Caco-2 (cell line): ENCODE measurements at regions of chr9 and their contacts with region 1.

Region 1: DNA sequence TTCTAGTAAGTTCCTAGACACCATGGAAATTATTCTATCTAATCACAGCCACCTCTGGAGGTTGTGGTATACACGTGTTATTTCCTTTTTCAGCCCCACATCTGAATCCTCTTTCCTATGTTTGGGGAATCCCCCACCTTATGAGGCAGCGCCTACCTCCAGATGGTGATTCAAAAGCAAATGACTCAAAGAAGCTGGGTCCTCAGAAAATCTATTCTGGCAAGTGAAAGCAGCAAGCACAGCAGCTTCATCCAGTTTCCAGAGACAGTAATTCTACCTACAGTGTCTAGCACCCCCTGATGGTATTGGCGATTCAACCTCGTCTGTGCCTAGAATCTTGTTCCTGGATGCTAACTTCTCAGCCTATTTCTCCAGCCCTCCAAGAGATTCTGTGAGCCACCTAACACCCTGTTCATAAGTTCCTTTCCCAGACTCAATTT is 43.0 kb downstream of the STRBP start:
- DNase-seq: peak; percentile 43 to 46
- H3K4me3 ChIP-seq: no peak overlapping the region
- H3K4me3 Mint-ChIP-seq: no peak overlapping the region
- H3K27ac Mint-ChIP-seq: no peak overlapping the region
- H3K4me1 ChIP-seq: peaks cover 6% of the 10 kb centered on the region; the same call in 1 of the 2 replicates
- H3K4me1 Mint-ChIP-seq: peaks cover 13% of the 10 kb centered on the region
- H3K27me3 ChIP-seq: no peaks in the 10 kb centered on the region
- H3K27me3 Mint-ChIP-seq: no peaks in the 10 kb centered on the region
- CTCF ChIP-seq: peak; percentile 33 to 58

Region 2: DNA sequence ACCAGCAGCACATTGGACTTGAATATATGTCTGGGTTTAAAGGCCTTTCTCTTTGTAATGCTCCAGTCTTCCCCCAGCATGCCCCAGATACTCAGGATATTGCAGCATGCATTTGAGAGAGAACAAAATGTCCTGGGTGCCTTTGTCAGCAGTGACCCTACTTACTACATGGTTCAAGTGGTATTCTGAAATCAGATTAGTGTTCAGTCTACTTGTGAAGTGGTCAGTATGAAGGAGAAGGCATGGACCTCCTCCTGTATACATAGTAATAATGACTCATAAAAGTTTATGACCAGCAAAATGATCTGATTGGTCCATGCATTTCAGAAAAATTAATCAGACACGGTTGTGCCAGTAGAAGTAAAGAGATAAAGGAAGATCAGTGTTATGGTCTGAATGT is 166.6 kb before region 1 on chr9:
- CTCF ChIA-PET with region 1: no interaction called
- POLR2A ChIA-PET with region 1: no interaction called
- intact Hi-C with region 1: no loop called
- DNase-seq: no peak
- H3K4me3 ChIP-seq: no peak overlapping the region
- H3K4me3 Mint-ChIP-seq: no peak overlapping the region
- H3K27ac Mint-ChIP-seq: no peak overlapping the region
- H3K4me1 ChIP-seq: peaks cover 5% of the 10 kb centered on the region; the same call in 1 of the 2 replicates
- H3K4me1 Mint-ChIP-seq: no peaks in the 10 kb centered on the region
- H3K27me3 ChIP-seq: no peaks in the 10 kb centered on the region
- H3K27me3 Mint-ChIP-seq: no peaks in the 10 kb centered on the region
- CTCF ChIP-seq: no peak

Region 3: GRCh38 chr9:123081824-123082223 is 143.6 kb before region 1 on chr9:
- CTCF ChIA-PET with region 1: no interaction called
- POLR2A ChIA-PET with region 1: no interaction called
- intact Hi-C with region 1: loop called (anchors 5 kb)
- DNase-seq: peak in 1 of 2 experiments; percentile 49
- H3K4me3 ChIP-seq: no peak overlapping the region
- H3K4me3 Mint-ChIP-seq: no peak overlapping the region
- H3K27ac Mint-ChIP-seq: no peak overlapping the region
- H3K4me1 ChIP-seq: peaks cover 4% of the 10 kb centered on the region; the same call in 1 of the 2 replicates
- H3K4me1 Mint-ChIP-seq: no peaks in the 10 kb centered on the region
- H3K27me3 ChIP-seq: no peaks in the 10 kb centered on the region
- H3K27me3 Mint-ChIP-seq: no peaks in the 10 kb centered on the region
- CTCF ChIP-seq: peak; percentile 53 to 72

Region 4: GRCh38 chr9:123102375-123103110 is 122.9 kb before region 1 on chr9:
- CTCF ChIA-PET with region 1: interaction called, 6 read pairs
- POLR2A ChIA-PET with region 1: no interaction called
- intact Hi-C with region 1: loop called (anchors 2 kb)
- DNase-seq: peak; percentile 30 to 35
- H3K4me3 ChIP-seq: no peak overlapping the region
- H3K4me3 Mint-ChIP-seq: peak overlapping the region; percentile 4
- H3K27ac Mint-ChIP-seq: peak overlapping the region; percentile 59
- H3K4me1 ChIP-seq: peaks cover 25% of the 10 kb centered on the region
- H3K4me1 Mint-ChIP-seq: peaks cover 12% of the 10 kb centered on the region
- H3K27me3 ChIP-seq: no peaks in the 10 kb centered on the region
- H3K27me3 Mint-ChIP-seq: no peaks in the 10 kb centered on the region
- CTCF ChIP-seq: peak; percentile 25 to 47